Activated CD8-positive, alpha-beta T cell treated with anti-CD3 and anti-CD28 coated beads, Interleukin-2, amount 10 ng/mL, durations not matched to agents 7 days and 5 days (primary cell): ENCODE measurements at regions of chr17 and their contacts with region 1.

Region 1: DNA sequence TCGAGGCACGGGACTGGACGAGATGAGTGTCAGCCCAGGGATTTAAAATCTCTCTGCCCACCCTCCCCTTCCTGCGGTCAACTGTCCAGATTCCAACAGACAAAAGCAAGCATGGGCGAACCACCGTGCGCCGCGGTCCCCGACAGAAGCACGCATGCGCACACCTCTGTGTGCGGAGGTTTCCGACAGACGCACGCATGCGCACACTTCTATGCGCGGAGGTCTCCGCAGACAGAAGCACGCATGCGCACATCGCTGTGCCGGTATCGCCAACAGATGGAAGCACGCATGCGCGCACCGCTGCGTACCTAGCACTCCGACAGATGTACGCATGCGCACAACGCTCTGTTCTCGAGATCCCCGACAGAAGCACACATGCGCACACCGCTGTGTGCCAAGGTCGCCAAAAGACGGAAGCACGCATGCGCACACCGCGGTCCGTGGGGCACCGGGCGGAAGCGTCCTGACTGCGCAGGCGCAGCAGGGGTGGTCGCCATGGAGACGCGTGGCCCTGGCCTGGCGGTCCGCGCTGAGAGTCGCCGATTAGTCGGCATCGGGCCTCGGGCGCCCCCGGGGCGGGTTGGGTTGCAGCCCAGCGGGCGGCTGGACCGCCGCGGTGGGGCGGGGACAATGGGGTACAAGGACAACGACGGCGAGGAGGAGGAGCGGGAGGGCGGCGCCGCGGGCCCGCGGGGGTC is 57.4 kb upstream of the RPH3AL start:
- DNase-seq: peak; percentile 100
- ATAC-seq: peak; percentile 72
- H3K4me3 Mint-ChIP-seq: peak overlapping the region; percentile 72
- H3K27ac Mint-ChIP-seq: peak overlapping the region; percentile 81
- H3K4me1 Mint-ChIP-seq: peaks cover 49% of the 10 kb centered on the region
- H3K27me3 Mint-ChIP-seq: peaks cover 3% of the 10 kb centered on the region

Region 2: DNA sequence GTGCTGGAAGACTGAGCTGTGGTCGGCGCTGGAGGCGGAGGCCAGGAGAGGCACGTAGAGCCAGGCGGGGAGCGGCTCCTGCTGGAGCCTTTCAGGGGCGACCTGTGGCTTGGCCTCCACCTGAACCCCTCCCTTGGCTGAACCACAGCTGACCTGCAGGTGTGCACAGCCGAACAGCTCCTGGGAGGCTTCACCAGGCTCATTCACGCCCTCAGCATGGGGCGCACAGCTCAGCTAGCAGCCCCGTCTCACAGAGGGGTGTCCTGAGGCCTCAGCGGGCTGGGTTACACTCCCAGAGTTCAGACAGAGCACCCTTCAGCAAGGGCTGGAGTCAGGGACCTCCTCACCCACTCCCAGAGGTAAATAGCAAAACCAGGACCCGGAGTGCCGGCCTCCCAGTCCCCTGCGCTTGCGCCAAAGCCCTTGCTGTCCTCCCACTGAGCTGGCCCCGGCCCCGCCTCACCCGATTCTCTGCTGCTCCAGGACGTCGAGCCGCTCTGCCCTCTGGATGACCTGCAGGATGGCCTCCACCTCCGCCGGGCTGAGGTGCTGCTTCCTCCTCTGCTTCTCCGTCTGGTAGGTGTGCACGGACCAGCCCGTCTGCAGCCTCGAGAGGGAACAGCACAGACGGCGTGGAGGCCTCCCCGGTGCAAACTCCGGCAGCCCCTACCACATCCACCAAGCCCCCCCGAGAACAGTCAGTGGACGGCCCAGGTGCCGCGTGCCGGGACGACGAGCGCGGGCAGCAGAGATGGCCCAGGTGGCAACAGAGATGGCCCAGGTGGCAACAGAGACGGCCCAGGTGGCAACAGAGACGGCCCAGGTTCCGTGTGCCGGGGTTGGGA is 89.0 kb before region 1 on chr17:
- CTCF ChIA-PET with region 1: no interaction called
- POLR2A ChIA-PET with region 1: no interaction called
- DNase-seq: no peak
- ATAC-seq: no peak
- H3K4me3 Mint-ChIP-seq: no peak overlapping the region
- H3K27ac Mint-ChIP-seq: no peak overlapping the region
- H3K4me1 Mint-ChIP-seq: no peaks in the 10 kb centered on the region
- H3K27me3 Mint-ChIP-seq: no peaks in the 10 kb centered on the region

Region 3: GRCh38 chr17:422196-422930 is 12.4 kb after region 1 on chr17:
- CTCF ChIA-PET with region 1: interaction called, 15 read pairs
- POLR2A ChIA-PET with region 1: no interaction called
- DNase-seq: no peak
- ATAC-seq: no peak
- H3K4me3 Mint-ChIP-seq: no peak overlapping the region
- H3K27ac Mint-ChIP-seq: peak overlapping the region; percentile 27
- H3K4me1 Mint-ChIP-seq: peaks cover 58% of the 10 kb centered on the region
- H3K27me3 Mint-ChIP-seq: peaks cover 2% of the 10 kb centered on the region

Region 4: DNA sequence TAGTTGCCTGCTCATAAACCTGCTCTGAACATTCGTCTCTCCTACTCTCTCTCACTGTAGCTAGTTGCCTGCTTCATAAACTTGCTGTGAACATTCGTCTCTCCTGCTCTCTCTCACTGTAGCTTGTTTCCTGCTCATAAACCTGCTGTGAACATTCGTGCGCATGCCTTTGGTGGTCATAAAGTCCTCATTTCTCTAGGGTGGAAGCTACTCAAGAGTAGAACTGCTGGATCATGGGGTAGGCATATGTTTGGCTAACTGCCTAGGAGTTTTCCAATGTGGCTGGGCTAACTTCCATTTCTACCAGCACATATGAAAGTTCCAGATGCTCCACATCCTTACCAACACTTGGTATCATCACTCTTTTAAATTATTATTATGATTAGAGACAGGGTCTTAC is 117.2 kb after region 1 on chr17:
- CTCF ChIA-PET with region 1: interaction called, 10 read pairs
- POLR2A ChIA-PET with region 1: no interaction called
- DNase-seq: no peak
- ATAC-seq: no peak
- H3K4me3 Mint-ChIP-seq: no peak overlapping the region
- H3K27ac Mint-ChIP-seq: no peak overlapping the region
- H3K4me1 Mint-ChIP-seq: no peaks in the 10 kb centered on the region
- H3K27me3 Mint-ChIP-seq: no peaks in the 10 kb centered on the region

Region 5: DNA sequence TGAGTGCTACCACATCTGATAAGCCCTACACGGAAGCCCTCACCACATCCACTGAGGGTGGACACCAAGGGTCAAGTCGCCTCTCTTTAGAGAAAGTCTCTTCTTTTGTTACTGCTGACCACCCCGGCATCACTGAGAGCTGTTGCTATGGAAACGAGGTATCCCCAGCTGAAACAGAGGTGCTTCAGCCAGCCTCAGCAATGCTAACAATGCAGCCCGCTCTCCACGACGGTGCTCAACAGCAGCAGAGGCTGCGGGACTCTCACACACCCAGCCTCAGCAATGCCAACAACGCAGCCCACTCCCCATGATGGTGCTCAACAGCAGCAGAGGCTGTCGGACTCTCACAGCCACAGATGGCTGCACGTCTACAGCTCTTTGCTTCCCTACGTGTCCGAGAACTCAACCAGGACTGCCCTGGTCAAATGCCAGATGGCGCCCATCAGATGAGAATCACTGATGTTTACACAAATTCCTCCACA is 263.2 kb after region 1 on chr17:
- CTCF ChIA-PET with region 1: interaction called, 17 read pairs
- POLR2A ChIA-PET with region 1: no interaction called
- DNase-seq: no peak
- ATAC-seq: no peak
- H3K4me3 Mint-ChIP-seq: no peak overlapping the region
- H3K27ac Mint-ChIP-seq: no peak overlapping the region
- H3K4me1 Mint-ChIP-seq: no peaks in the 10 kb centered on the region
- H3K27me3 Mint-ChIP-seq: no peaks in the 10 kb centered on the region

Region 6: DNA sequence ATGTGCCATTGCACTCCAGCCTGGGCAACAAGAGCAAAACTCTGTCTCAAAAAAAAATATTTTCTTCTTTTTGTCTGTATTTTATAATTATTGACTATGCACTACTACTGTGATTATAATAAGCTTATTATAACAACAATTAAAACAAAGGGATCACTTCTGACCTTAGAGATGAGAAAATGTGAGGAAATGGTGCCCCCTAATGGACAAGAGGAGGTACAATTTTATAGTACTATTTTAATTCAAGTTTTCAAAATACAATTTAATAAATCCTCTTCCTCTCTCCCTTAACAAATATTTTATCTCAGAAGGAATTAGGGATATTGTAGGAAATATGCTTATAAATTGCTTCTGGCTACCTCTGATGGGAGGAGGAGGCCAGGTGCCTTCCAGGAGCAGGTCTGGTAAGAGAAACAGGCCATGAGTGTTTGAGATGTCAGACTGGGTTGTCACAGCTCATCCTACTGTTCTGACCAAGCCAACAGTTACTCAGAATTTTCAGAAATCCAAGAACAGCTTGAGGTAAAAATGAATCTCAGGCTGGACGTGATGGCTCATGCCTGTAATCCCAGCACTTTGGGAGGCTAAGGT is 290.6 kb after region 1 on chr17:
- CTCF ChIA-PET with region 1: interaction called, 209 read pairs
- POLR2A ChIA-PET with region 1: interaction called, 4 read pairs
- DNase-seq: no peak
- ATAC-seq: peak; percentile 55
- H3K4me3 Mint-ChIP-seq: no peak overlapping the region
- H3K27ac Mint-ChIP-seq: no peak overlapping the region
- H3K4me1 Mint-ChIP-seq: no peaks in the 10 kb centered on the region
- H3K27me3 Mint-ChIP-seq: no peaks in the 10 kb centered on the region

Region 7: GRCh38 chr17:752002-752619 is 342.1 kb after region 1 on chr17 and contains the start of gene GEMIN4:
- CTCF ChIA-PET with region 1: interaction called, 12 read pairs
- POLR2A ChIA-PET with region 1: no interaction called
- DNase-seq: peak; percentile 97
- ATAC-seq: peak; percentile 88
- H3K4me3 Mint-ChIP-seq: peak within 1 kb of the TSS; percentile 95
- H3K27ac Mint-ChIP-seq: peak within 1 kb of the TSS; percentile 96
- H3K4me1 Mint-ChIP-seq: peaks cover 31% of the 10 kb centered on the region
- H3K27me3 Mint-ChIP-seq: no peaks in the 10 kb centered on the region
- total RNA-seq, gene GEMIN4: 41.4 to 45.8 TPM